ENCODE measurements at regions of chr13 and their contacts with region 1.

Region 1: DNA sequence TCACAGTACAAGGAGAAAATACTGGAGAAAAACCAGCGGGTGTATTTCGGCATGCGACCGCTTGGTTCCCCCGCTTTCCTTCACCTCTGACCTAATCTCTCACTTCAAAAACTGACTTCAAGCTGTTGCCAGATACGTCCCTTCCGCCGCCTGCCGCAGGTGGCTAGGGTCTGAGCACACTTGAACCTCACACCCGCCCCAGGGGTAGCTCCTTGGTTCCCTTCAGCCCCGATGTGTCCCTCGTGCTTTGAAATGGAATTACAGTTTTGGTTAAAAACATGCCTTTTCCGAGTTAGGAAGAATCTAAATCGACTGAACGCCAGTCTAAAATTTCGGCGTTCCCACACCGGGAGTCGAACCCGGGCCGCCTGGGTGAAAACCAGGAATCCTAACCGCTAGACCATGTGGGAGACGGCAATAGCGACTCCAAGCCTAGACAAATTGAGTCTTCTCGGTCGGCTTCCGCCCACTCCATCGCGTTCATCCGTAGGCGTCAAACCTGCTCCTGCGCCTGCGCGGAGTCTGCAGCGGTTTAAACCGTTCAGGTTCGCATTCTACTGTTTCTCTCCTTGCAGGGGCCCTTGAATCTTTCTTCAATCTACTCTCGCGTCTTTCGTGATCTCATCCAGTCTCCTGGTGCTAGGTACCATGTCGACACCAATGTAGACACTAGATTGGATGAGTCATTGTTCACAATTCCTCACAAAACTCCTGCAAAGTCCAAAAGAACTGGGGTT is 71.5 kb downstream of the NUFIP1 start:
- DNase-seq: peak; percentile 96
- ATAC-seq: peak; percentile 81
- H3K4me3 Mint-ChIP-seq: no peak overlapping the region
- H3K27ac Mint-ChIP-seq: no peak overlapping the region
- H3K4me1 Mint-ChIP-seq: peaks cover 3% of the 10 kb centered on the region
- H3K27me3 Mint-ChIP-seq: no peaks in the 10 kb centered on the region

Region 2: DNA sequence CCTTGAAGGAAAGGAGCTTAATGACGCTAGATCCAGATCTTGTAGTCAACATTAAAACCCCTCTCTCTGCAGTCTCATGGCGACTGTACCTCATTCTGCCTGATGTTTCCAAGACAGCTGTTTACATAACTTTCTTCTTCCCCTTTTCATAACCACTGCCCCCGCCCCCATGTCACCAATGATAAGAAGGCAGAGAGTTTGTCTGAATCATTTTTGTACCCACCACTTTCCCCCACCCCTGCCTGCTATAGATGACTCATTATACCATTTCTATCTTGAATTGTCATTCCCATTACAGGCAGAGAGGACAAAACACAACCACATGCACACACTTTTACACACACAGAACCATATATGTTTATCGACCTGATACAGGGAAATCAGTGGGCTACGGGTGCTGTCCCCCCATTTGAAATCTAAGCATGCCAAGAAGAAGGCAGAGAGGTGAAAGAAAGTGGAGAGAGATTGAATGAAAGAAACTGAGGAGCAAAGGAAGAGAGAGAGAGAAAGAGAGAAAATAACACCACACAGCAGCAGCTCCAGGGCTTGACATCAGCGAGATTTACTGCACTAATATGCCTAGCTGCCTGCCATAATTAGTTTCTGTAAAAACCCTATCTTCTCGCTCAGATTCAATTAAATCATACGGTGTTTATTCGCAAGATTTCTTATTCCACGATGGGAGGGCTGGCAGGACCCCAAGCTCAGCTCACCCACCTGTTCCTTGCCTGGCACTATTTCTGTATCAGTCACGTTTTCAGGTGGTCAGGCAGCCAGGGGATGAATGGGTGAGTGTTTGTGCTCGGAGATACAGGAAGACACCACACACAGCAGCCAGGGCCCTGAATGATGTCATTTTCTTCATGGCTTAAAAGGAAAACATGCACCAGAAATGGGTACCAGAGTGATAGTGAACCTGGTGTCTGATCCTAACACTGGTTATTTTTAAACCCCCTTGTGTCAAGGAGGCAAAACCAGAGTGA is 658.4 kb before region 1 on chr13:
- CTCF ChIA-PET with region 1: no interaction called
- POLR2A ChIA-PET with region 1: no interaction called
- intact Hi-C with region 1: loop called in 1 of 2 experiments (anchors 1 kb)
- DNase-seq: peak; percentile 90
- ATAC-seq: peak; percentile 87
- H3K4me3 Mint-ChIP-seq: peak overlapping the region; percentile 62
- H3K27ac Mint-ChIP-seq: peak overlapping the region; percentile 94
- H3K4me1 Mint-ChIP-seq: peaks cover 21% of the 10 kb centered on the region
- H3K27me3 Mint-ChIP-seq: peaks cover 5% of the 10 kb centered on the region

Region 3: GRCh38 chr13:44484562-44485138 is 433.1 kb before region 1 on chr13:
- CTCF ChIA-PET with region 1: interaction called, 10 read pairs
- POLR2A ChIA-PET with region 1: no interaction called
- intact Hi-C with region 1: loop called (anchors 1 to 5 kb)
- DNase-seq: no peak
- ATAC-seq: peak; percentile 44
- H3K4me3 Mint-ChIP-seq: peak overlapping the region; percentile 38
- H3K27ac Mint-ChIP-seq: peak overlapping the region; percentile 20
- H3K4me1 Mint-ChIP-seq: peaks cover 13% of the 10 kb centered on the region
- H3K27me3 Mint-ChIP-seq: no peaks in the 10 kb centered on the region

Region 4: GRCh38 chr13:44768239-44768638 is 149.5 kb before region 1 on chr13:
- CTCF ChIA-PET with region 1: no interaction called
- POLR2A ChIA-PET with region 1: no interaction called
- intact Hi-C with region 1: loop called in 1 of 2 experiments (anchors 1 kb)
- DNase-seq: peak; percentile 69
- ATAC-seq: peak; percentile 70
- H3K4me3 Mint-ChIP-seq: peak overlapping the region; percentile 5
- H3K27ac Mint-ChIP-seq: peak overlapping the region; percentile 90
- H3K4me1 Mint-ChIP-seq: peaks cover 28% of the 10 kb centered on the region
- H3K27me3 Mint-ChIP-seq: no peaks in the 10 kb centered on the region

Region 5: DNA sequence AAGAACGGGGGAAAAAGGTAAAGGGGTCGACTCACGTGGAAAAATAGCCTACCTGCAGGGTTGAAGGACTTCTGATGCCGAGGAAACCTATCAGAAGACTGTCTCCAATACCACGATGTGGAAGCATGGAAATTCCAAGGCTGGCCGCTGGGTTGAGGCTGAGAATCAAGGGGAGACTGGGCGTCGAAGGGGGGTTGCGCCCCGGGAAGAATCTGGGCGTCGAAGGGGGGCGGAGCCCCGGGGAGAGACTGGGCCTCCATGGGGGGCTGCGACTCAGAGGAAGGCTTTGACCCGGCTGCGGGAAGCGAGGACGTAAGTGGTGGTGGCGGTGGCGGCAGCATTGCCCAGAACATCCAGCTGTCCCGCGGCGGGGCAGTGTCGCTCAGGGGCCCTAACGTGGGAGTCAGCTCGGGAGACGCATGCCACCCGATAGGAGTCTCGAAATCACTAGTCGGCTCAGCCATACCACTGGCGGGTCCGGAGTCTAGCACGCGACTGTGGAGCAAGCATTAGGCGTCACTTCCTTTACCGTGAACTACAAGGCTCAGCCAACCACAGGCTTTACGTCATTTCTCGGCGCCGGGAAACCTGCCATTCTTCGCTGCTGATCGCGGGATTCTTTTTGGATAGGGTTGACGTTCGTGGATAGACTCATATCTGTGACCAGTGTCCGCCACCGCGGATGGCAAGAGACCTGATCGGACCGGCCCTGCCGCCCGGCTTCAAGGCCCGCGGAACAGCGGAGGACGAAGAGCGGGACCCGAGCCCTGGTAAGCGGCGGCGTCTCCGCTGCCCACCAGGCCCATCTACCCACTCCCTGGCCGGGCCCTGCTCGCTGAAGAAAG is 71.4 kb after region 1 on chr13 and contains the starts of genes GPALPP1 and NUFIP1:
- CTCF ChIA-PET with region 1: no interaction called
- POLR2A ChIA-PET with region 1: no interaction called
- intact Hi-C with region 1: loop called (anchors 1 kb)
- DNase-seq: peak; percentile 97
- ATAC-seq: peak; percentile 99
- H3K4me3 Mint-ChIP-seq: peak within 1 kb of the TSS; percentile 98
- H3K27ac Mint-ChIP-seq: peak within 1 kb of the TSS; percentile 96
- H3K4me1 Mint-ChIP-seq: peaks cover 57% of the 10 kb centered on the region
- H3K27me3 Mint-ChIP-seq: no peaks in the 10 kb centered on the region
- total RNA-seq, gene GPALPP1: 31.8 to 40.5 TPM
- total RNA-seq, gene NUFIP1: 10.1 to 13.6 TPM

Region 6: DNA sequence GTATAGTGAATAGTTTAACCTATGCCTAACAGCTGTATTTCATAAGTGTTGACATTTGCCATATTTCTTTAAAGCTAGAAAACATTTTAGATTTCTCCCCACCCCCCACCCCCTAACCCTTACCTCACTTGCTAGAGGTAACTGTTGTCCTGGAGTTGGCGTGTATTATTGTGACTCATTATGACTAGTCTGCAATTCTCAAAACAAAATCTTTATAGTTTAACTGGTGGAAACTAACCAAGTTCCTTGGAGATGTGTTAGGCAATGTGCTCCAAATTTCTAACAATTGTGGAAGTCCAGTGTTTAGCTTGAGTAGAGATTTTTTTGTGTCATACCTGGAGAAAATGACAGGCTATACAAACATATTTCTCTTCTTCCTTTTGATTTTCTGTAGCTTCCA is 245.1 kb after region 1 on chr13:
- CTCF ChIA-PET with region 1: no interaction called
- POLR2A ChIA-PET with region 1: no interaction called
- intact Hi-C with region 1: no loop called
- DNase-seq: no peak
- ATAC-seq: peak; percentile 63
- H3K4me3 Mint-ChIP-seq: no peak overlapping the region
- H3K27ac Mint-ChIP-seq: no peak overlapping the region
- H3K4me1 Mint-ChIP-seq: peaks cover 13% of the 10 kb centered on the region
- H3K27me3 Mint-ChIP-seq: no peaks in the 10 kb centered on the region

Region 7: DNA sequence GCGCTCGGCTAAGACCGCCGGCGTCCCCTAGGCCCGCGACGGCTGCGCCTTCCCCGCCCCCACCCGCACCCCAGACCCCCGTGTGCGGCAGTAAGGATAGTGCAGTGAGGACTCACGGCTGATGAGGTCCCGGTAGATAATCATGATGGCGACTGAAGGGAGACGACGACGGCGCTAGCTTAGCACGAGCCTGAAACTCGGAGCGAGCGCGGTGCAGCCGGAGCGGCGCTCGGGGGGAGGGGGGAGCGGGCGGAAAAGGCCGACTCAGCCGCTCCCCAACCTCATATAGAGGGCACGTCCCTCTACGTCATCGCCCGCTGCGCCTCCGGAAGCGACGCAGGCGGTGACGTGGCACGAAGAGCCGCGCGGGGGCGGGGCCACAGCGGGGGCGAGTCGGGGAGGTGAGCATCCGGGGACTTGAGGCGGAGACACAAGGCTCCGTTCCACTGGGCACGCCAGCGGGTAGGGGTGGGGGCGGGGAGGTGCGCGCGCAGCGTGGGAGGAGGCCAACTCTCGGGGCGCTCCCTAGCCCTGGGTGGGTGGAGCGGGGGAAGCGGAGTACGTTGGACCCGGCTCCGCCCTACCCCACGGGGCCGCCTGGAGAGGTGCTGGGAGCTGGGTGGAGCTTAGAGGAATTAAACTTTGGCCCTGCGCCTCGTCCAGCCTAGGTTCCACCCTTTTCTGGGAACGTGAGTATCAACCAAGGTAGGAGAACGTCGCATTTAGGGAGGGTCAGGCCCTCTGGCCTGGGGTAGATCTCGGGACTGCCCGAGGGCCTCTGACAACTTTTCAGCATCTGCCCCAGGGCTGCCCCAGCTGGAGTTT is 423.4 kb after region 1 on chr13 and contains the start of gene TPT1:
- CTCF ChIA-PET with region 1: no interaction called
- POLR2A ChIA-PET with region 1: interaction called, 4 read pairs
- intact Hi-C with region 1: loop called in 1 of 2 experiments (anchors 2 kb)
- DNase-seq: peak; percentile 100
- ATAC-seq: peak; percentile 85
- H3K4me3 Mint-ChIP-seq: peak within 1 kb of the TSS; percentile 99
- H3K27ac Mint-ChIP-seq: peak within 1 kb of the TSS; percentile 99
- H3K4me1 Mint-ChIP-seq: peaks cover 45% of the 10 kb centered on the region
- H3K27me3 Mint-ChIP-seq: no peaks in the 10 kb centered on the region
- total RNA-seq, gene TPT1: 3,408 to 3,964 TPM

Region 8: GRCh38 chr13:45464687-45465453 is 547.1 kb after region 1 on chr13 and contains the start of gene COG3:
- CTCF ChIA-PET with region 1: no interaction called
- POLR2A ChIA-PET with region 1: no interaction called
- intact Hi-C with region 1: loop called in 1 of 2 experiments (anchors 1 kb)
- DNase-seq: peak; percentile 97
- ATAC-seq: peak; percentile 99
- H3K4me3 Mint-ChIP-seq: peak within 1 kb of the TSS; percentile 93
- H3K27ac Mint-ChIP-seq: peak within 1 kb of the TSS; percentile 93
- H3K4me1 Mint-ChIP-seq: peaks cover 49% of the 10 kb centered on the region
- H3K27me3 Mint-ChIP-seq: no peaks in the 10 kb centered on the region
- total RNA-seq, gene COG3: 18.0 to 19.6 TPM

Measured in activated CD4-positive, alpha-beta T cell treated with anti-CD3 and anti-CD28 coated beads for 36 hours (primary cell).